WTC11 (cell line): ENCODE measurements at regions of chr9 and their contacts with region 1.

Region 1: GRCh38 chr9:15552636-15553527 is at the start of gene CCDC171:
- DNase-seq: peak; percentile 94
- ATAC-seq: peak; percentile 94
- H3K4me3 Mint-ChIP-seq: peak within 1 kb of the TSS; percentile 88
- H3K27ac Mint-ChIP-seq: peak within 1 kb of the TSS; percentile 97
- H3K4me1 Mint-ChIP-seq: peaks cover 7% of the 10 kb centered on the region
- H3K27me3 Mint-ChIP-seq: no peaks in the 10 kb centered on the region; the same call in none of the 2 replicates
- CTCF ChIP-seq: no peak
- total RNA-seq, gene CCDC171: 2.8 to 4.1 TPM (median 2.9 TPM) in 3 replicates

Region 2: GRCh38 chr9:15306757-15307534 is 245.9 kb before region 1 on chr9 and contains the start of gene TTC39B:
- CTCF ChIA-PET with region 1: interaction called, 4 read pairs
- POLR2A ChIA-PET with region 1: interaction called, 10 read pairs
- DNase-seq: peak; percentile 98
- ATAC-seq: peak; percentile 91
- H3K4me3 Mint-ChIP-seq: peak within 1 kb of the TSS; percentile 94
- H3K27ac Mint-ChIP-seq: peak within 1 kb of the TSS; percentile 95
- H3K4me1 Mint-ChIP-seq: peaks cover 23% of the 10 kb centered on the region
- H3K27me3 Mint-ChIP-seq: peaks cover 16% of the 10 kb centered on the region
- CTCF ChIP-seq: no peak
- total RNA-seq, gene TTC39B: 12.3 to 13.9 TPM (median 12.5 TPM) in 3 replicates

Region 3: DNA sequence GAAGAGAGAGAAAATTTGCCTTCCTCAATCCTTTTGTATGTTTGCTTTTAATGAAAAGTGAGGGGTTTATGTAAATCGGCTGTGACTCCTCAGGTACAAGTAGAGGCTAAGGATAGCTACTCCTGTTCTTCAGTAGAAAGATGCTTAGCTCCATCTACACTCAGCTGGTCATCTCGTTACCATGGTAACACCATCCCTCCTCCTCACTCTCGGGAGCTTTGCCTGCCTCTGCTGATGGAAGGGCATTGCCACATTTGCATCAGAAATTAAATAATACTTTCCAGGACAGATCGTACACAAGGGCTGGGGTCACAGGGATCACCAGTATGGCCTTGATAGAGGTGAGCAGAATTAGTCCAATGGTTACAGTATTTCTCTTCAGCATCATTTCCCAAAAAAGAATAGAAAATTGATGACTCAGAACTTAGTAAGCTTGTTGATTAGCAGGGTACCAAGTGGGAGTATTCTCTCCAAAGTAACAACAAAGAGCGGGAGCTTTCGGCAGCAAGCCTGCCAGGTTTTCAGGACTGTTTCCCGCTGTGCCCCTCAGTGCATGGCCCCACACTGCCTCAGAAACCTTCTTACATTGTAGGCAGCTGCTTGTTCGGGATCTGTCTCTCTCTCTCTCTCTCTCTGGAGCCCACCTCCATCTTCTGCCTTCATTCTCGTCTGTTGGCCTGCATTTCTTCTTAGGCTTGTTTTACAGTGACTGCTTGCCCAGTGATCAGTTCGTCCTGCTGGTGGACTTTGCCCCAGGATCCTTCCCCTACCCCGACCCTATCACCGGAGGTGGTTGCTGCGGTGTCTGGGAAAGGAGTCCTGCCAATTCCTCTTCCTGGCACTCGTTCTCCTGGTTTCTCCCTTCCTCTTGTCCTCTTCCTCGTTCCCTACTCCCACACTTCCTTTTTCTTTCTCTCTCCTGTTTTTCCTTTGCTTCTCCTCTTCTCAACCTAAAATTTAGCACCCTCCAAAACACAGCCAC is 182.1 kb before region 1 on chr9:
- CTCF ChIA-PET with region 1: no interaction called
- POLR2A ChIA-PET with region 1: no interaction called
- DNase-seq: no peak
- ATAC-seq: peak; percentile 40
- H3K4me3 Mint-ChIP-seq: no peak overlapping the region
- H3K27ac Mint-ChIP-seq: no peak overlapping the region
- H3K4me1 Mint-ChIP-seq: peaks cover 17% of the 10 kb centered on the region
- H3K27me3 Mint-ChIP-seq: no peaks in the 10 kb centered on the region; the same call in 1 of the 2 replicates
- CTCF ChIP-seq: no peak

Region 4: DNA sequence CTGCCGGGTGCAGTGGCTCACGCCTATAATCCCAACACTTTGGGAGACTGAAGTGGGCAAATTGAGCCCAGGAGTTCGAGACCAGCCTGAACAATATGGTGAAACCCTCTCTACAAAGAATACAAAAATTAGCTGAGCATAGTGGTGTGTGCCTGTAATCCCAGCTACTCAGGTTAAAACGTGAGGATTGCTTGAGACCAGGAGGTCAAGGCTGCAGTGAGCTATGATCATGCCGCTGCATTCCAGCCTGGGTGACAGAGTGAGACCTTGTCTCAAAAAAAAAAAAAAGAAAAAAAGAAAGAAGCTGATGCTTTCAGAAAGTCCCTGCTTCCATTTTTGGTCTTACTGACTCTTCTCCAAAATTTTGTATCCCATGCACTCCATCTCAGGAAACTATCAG is 98.9 kb before region 1 on chr9:
- CTCF ChIA-PET with region 1: no interaction called
- POLR2A ChIA-PET with region 1: no interaction called
- DNase-seq: no peak
- ATAC-seq: no peak
- H3K4me3 Mint-ChIP-seq: no peak overlapping the region
- H3K27ac Mint-ChIP-seq: no peak overlapping the region
- H3K4me1 Mint-ChIP-seq: no peaks in the 10 kb centered on the region
- H3K27me3 Mint-ChIP-seq: no peaks in the 10 kb centered on the region
- CTCF ChIP-seq: no peak

Region 5: DNA sequence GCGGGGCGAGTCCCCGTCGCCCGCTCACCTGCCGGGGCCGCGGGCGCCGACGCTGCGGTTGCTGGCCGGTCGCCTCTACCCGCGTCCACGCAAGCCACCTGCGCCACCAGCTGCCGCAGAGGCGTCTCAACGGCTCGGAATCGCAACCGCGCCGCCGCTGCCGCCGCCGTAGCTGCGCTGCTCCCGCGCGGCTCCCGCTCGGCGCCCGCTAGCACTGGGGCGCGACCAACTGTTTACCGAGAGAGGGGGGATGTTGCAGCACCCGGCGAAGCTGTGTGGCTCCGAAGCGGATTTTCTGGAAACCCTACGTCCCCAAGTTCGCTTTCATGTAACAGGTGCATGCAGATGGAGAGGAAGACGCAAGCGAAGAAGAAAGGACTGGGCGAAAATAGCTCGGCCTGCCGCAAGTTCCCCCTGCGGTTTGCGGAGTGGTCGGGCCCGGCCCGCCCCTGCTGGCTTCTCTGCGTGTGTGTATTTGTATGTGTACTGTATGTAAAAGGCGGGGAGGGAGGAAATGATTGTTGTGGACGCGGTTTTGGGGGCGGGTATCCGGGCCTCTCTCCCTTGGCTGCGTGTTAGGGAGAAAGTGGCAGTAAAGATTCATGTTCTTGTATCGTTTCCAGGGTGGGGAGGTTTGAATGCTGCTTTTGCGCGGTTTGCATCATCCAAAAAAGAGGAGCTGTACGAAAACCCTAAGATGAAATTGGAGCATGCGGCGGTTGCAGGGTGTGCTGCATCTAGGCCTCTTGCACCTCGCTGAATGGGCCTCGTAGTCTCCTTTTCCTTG is 41.9 kb before region 1 on chr9 and contains the start of gene PSIP1:
- CTCF ChIA-PET with region 1: interaction called, 30 read pairs
- POLR2A ChIA-PET with region 1: interaction called, 36 read pairs
- DNase-seq: peak; percentile 78
- ATAC-seq: peak; percentile 50
- H3K4me3 Mint-ChIP-seq: peak within 1 kb of the TSS; percentile 93
- H3K27ac Mint-ChIP-seq: peak within 1 kb of the TSS; percentile 100
- H3K4me1 Mint-ChIP-seq: peaks cover 60% of the 10 kb centered on the region
- H3K27me3 Mint-ChIP-seq: no peaks in the 10 kb centered on the region
- CTCF ChIP-seq: no peak
- total RNA-seq, gene PSIP1: 302 to 321 TPM (median 311 TPM) in 3 replicates

Region 6: GRCh38 chr9:15529566-15530324 is 23.1 kb before region 1 on chr9:
- CTCF ChIA-PET with region 1: interaction called, 19 read pairs
- POLR2A ChIA-PET with region 1: no interaction called
- DNase-seq: no peak
- ATAC-seq: no peak
- H3K4me3 Mint-ChIP-seq: no peak overlapping the region
- H3K27ac Mint-ChIP-seq: no peak overlapping the region
- H3K4me1 Mint-ChIP-seq: no peaks in the 10 kb centered on the region
- H3K27me3 Mint-ChIP-seq: no peaks in the 10 kb centered on the region
- CTCF ChIP-seq: no peak

Region 7: GRCh38 chr9:15606643-15607472 is 54.0 kb after region 1 on chr9:
- CTCF ChIA-PET with region 1: interaction called, 18 read pairs
- POLR2A ChIA-PET with region 1: interaction called, 7 read pairs
- DNase-seq: no peak
- ATAC-seq: no peak
- H3K4me3 Mint-ChIP-seq: no peak overlapping the region
- H3K27ac Mint-ChIP-seq: no peak overlapping the region
- H3K4me1 Mint-ChIP-seq: no peaks in the 10 kb centered on the region
- H3K27me3 Mint-ChIP-seq: no peaks in the 10 kb centered on the region
- CTCF ChIP-seq: peak; percentile 77

Region 8: DNA sequence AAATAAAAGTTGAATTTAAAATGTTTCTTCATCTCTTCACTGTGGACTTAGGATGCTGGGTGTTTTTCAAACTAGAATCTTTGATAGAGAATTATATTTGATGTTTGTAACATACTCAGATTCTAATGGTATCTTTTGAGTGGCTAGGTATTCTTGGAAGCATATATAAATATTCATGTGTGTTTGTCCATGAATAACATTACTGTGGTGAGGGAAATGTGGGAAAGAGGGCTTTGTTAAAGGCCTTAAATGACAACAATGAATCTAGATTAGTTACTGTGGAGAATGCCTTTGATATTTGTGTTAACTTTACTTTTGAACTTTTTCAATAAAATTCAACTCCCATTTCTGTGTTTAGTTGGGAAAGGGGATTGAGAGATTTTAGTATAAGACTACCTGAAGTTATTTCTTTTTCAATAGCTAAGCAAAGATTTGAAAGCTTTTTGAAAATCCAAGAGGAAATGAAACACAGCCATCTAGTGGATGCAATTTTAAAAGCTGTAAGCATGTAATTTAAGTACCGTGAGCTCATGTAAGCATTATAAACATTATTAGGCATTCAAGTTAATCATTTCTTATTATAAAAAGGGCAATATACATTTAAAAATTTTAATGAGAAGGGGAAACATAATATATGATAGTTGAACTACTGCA is 69.6 kb after region 1 on chr9:
- CTCF ChIA-PET with region 1: interaction called, 15 read pairs
- POLR2A ChIA-PET with region 1: no interaction called
- DNase-seq: no peak
- ATAC-seq: no peak
- H3K4me3 Mint-ChIP-seq: no peak overlapping the region
- H3K27ac Mint-ChIP-seq: no peak overlapping the region
- H3K4me1 Mint-ChIP-seq: peaks cover 5% of the 10 kb centered on the region
- H3K27me3 Mint-ChIP-seq: no peaks in the 10 kb centered on the region
- CTCF ChIP-seq: no peak